Activated CD8-positive, alpha-beta T cell treated with anti-CD3 and anti-CD28 coated beads, Interleukin-2, amount 10 ng/mL, durations not matched to agents 7 days and 5 days (primary cell): ENCODE measurements at regions of chr7 and their contacts with region 1.

Region 1: DNA sequence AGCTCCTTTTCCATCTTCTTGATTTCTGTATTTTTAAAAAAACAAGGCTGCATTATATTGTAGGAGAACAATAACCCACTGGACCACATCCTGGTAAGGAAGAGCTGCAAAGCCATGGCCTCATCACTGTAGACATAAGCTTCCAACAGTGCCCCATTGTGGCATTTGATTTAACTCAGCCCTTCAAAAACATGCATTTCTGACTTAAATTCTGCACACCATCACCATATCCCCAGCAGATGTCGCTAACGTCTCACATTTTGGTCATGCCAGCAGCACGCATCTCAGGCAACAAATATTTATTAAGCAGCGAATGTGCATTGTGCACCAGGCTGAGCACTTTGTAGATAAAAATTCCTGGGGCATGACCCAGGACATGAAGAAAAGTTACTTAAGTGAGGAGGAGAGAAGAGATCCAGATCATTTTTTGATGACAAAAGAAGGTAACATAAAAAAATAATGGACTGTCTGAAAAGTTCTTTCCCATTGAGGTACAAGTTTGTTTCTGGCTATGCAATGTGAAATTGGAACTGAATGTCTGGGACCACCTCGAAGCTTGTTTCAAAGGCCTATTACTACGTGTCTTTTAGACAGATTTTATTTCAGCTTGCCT is 164.6 kb upstream of the CDCA7L start:
- DNase-seq: peak; percentile 80
- ATAC-seq: peak; percentile 76
- H3K4me3 Mint-ChIP-seq: no peak overlapping the region
- H3K27ac Mint-ChIP-seq: no peak overlapping the region
- H3K4me1 Mint-ChIP-seq: no peaks in the 10 kb centered on the region
- H3K27me3 Mint-ChIP-seq: peaks cover 2% of the 10 kb centered on the region

Region 2: DNA sequence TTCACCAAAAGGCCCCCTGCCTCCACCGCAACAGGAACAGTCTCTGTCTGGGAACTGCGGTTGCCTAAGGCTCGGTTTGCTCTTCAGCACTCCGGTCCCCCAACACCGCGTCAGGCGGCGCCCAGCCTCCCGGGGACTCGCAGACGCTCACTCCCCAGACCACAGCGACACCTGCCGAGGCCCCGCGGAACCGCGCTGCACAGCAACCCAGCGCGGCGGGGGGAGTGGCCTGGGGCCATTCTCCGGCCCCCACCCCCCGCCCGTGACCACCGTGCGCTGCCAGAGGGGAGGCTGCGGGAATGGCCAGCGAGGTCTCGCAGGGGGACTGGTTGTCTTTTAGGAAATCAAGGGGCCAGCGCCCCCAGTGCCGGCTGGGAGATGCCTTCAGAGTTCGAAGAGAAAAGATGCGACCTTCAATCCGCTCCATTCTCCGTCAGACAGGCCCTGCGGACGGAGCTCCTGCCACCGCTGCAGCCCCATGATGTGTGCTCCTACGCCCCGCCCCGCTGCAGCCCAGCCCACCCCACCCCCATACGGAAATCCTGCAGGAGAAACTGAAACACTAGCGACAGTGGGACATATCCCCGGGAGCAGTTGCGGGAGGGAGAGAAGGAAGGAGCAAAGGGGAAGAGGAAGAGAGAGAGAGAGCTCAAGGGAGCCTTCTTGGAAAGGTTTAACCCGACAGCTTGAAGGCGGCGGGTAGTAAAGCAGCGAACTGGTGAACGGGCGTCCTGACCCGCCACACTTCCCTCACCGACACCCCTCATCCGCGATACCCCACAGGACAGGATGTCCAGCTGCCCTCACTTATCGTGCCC is 27.2 kb before region 1 on chr7:
- CTCF ChIA-PET with region 1: interaction called, 13 read pairs
- POLR2A ChIA-PET with region 1: no interaction called
- DNase-seq: peak; percentile 85
- ATAC-seq: peak; percentile 99
- H3K4me3 Mint-ChIP-seq: peak overlapping the region; percentile 77
- H3K27ac Mint-ChIP-seq: peak overlapping the region; percentile 40
- H3K4me1 Mint-ChIP-seq: peaks cover 16% of the 10 kb centered on the region
- H3K27me3 Mint-ChIP-seq: peaks cover 40% of the 10 kb centered on the region

Region 3: DNA sequence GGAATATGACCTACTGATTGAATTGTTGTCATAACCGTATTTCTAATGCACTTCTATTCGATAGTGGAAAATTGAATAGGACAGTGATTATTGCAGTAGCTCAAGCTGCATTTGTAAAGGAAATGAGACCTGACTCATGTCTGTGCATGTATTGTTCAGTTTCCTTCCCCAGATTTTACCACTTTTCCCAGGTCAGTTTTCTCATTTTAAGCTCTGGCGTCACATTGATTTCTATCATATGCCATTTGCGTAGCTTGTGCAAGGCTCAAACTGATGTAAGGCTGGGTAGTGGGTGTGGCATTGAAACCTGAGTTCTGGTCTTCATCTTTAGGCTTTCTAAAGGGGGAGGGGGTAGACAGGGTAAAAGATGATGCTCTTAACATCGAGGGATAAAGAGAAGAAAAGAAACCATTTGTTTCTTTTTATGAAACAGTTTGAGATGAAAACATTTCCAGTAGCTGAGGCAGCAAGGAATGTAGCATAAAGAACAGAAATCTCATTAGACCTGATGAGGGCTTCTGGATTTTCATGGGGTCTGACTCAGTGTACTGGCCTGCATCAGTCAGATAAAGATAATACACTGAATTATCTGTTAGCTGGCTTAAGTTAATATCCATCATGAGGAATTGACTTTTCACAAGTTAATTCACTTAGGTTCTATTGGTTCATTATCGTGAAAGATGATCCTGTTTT is 17.6 kb after region 1 on chr7:
- CTCF ChIA-PET with region 1: interaction called, 11 read pairs
- POLR2A ChIA-PET with region 1: no interaction called
- DNase-seq: no peak
- ATAC-seq: no peak
- H3K4me3 Mint-ChIP-seq: no peak overlapping the region
- H3K27ac Mint-ChIP-seq: no peak overlapping the region
- H3K4me1 Mint-ChIP-seq: no peaks in the 10 kb centered on the region
- H3K27me3 Mint-ChIP-seq: peaks cover 9% of the 10 kb centered on the region

Region 4: GRCh38 chr7:22140578-22140977 is 30.2 kb after region 1 on chr7:
- CTCF ChIA-PET with region 1: interaction called, 13 read pairs
- POLR2A ChIA-PET with region 1: no interaction called
- DNase-seq: no peak
- ATAC-seq: no peak
- H3K4me3 Mint-ChIP-seq: no peak overlapping the region
- H3K27ac Mint-ChIP-seq: no peak overlapping the region
- H3K4me1 Mint-ChIP-seq: no peaks in the 10 kb centered on the region
- H3K27me3 Mint-ChIP-seq: peaks cover 21% of the 10 kb centered on the region

Region 5: DNA sequence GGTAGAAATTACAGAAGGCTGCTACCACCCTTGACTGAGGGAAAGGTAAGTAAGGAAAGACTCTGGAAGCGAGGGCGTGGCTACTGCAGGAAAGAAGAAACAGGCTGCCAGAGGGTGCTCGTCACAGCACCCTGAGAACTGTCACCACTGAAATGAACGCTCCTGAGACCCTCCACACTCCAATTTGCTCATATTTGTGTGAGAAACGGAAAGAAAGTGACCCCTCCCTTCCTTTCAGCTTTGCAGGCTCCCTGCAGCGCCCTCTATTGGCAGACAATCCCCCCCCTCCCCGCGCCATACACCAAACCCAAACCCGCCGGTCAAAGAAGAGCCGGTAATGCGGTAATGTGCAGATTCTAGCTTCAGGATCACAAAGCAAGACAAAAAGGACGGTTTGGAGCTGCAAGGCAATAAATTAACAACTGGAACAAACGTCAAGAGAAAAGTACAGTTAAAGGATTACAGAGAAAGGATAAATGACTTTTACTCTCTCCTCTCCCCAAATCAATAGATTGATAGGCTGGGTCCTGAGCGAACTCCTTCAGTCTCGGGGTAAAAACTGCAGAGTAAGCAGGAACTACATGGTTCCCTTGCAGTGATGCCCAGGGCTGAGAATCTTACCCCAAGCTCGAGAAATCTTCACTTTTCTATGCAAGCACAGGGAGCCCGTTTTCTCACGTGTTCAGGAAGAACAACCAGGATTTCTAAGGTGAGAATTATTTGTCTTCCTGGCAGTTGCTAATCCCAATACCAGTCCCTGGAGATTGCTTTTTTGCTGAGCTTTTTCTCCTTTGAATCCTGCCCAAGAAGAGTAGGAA is 342.0 kb after region 1 on chr7:
- CTCF ChIA-PET with region 1: interaction called, 11 read pairs
- POLR2A ChIA-PET with region 1: no interaction called
- DNase-seq: peak; percentile 63
- ATAC-seq: peak; percentile 60
- H3K4me3 Mint-ChIP-seq: no peak overlapping the region
- H3K27ac Mint-ChIP-seq: no peak overlapping the region
- H3K4me1 Mint-ChIP-seq: peaks cover 2% of the 10 kb centered on the region
- H3K27me3 Mint-ChIP-seq: peaks cover 56% of the 10 kb centered on the region

Region 6: DNA sequence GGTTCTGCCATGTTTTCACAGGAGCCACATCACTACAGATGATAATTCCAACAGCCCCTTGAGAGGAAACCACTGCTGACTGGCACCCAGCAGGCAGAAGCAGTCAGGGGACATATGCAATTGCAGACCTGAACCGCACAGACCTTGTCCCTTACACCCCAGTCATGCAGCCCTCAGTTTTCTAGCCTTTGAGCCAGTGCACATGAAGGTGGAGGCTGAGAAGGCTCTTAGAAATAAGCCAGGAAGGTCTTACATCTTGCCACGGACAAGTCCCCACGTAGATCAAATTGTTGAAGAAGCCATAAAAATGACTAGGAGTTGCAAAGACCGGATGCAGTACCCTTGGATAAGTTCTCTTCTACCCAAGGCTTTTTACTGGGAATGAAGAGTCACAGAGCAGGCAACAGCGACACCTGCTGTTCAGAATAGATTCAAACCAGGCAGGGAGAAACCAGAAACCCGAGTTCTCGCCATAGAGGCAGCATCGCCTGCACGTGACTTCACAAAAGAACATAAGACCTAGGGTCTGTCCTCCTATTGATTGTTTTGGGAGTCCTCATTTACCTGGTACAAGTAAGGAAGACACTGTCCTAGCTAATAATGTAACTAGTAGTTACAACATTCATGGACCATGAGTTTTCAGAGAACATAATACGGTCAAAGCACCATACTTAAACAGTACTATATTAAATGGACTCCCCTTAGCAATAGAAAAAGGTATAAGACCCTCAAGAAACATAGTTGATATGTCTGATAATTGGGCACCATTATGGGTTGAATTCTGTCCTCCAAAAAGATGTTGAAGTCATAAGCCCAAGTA is 378.5 kb after region 1 on chr7:
- CTCF ChIA-PET with region 1: interaction called, 28 read pairs
- POLR2A ChIA-PET with region 1: no interaction called
- DNase-seq: peak; percentile 73
- ATAC-seq: peak; percentile 67
- H3K4me3 Mint-ChIP-seq: no peak overlapping the region
- H3K27ac Mint-ChIP-seq: no peak overlapping the region
- H3K4me1 Mint-ChIP-seq: no peaks in the 10 kb centered on the region
- H3K27me3 Mint-ChIP-seq: peaks cover 11% of the 10 kb centered on the region